Gastrocnemius medialis (tissue), 4 donors: ENCODE measurements at regions of chr10 and their contacts with region 1.

Region 1: DNA sequence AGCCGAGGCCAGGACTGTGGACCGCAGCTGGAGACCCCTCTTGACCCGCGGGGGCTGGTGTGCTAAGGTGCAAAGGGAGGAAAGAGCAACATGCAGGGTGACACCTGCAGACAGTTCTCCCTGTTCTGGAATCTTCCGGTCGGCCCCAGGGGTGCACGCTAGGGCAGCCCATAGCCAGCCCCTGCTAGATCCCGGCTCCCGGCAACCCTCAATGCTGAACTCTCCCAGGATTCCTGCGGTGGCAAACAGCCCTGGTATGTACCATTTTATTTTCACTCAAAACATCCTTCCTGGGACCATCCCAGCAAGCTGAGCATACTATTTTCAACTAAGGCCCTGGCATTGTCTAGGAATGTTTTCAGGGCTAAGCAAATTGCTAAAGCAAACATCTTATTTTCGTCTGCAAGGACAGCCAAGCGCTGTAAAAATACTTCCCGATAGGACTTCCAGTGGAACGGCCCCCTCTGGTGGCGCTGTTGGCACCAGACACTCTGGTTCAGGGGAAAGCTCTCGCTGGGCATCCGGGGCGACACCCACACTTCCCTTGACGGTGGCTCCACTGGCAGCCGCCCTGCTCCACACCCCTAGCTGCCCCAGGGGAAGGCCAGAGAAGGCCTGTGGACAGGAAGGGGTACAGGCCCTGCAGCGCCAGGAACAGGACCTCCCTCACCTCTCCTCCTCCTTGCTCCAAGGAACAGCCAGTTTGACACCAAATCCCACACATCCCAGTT is 99.4 kb downstream of the CTBP2 start:
- DNase-seq: peak; percentile 79 to 85
- ATAC-seq: peak; percentile 51 to 74
- H3K4me3 ChIP-seq: peak overlapping the region; percentile 10 to 32 (median 26)
- H3K27ac ChIP-seq: peak overlapping the region; percentile 91 to 93 (median 91)
- H3K4me1 ChIP-seq: peaks cover 98 to 99% of the 10 kb centered on the region in 2 donors
- H3K27me3 ChIP-seq: no peaks in the 10 kb centered on the region
- CTCF ChIP-seq: peak; percentile 71 to 92 (median 88)
- POLR2A ChIP-seq: no peak

Region 2: DNA sequence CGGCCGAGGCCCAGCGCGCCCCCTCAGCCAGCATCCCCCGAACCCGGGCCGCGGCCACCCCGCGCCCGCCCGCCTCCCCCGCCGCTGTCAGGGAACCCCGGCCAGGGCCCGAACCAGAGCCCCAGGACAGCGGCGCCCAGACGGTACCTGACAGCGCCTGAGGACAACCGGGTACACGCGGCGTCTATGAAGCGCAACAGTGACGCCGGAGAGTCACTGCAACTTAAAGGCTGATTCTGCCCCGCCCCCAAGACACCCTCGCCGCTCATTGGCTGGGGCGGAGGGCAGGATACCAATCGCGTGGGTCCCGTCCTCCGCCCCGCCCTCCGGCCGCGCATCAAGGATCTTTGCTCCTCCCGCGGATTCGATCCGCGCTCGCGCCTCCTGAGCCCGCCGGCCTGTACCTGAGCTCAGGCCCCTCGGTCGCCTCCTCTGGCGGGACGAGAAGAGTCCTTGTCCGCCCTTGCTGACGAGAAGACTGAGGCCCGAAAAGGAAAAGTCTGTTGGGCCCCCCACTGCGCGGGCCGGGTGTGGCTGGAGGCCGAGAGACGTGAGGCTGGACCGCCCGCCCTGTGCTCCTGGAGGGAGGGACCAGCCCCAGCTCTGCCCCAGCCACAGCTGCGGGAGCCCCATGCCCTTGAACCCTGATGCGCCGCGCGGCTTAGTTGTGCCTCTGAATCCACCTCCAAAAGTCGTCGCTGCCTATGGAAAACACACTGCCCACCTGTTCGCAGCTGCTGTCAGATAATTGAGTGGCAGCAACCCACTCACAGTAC is 642.1 kb before region 1 on chr10 and contains the start of gene OAT:
- in situ Hi-C with region 1: no loop called
- intact Hi-C with region 1: loop called (anchors 2 kb)
- DNase-seq: peak; percentile 94 to 95
- ATAC-seq: peak; percentile 93
- H3K4me3 ChIP-seq: peak within 1 kb of the TSS; percentile 67 to 86 (median 76)
- H3K27ac ChIP-seq: peak within 1 kb of the TSS; percentile 81 to 95 (median 94)
- H3K4me1 ChIP-seq: peaks cover 31 to 42% of the 10 kb centered on the region in 2 donors
- H3K27me3 ChIP-seq: no peaks in the 10 kb centered on the region
- CTCF ChIP-seq: no peak
- POLR2A ChIP-seq: peak; percentile 98 to 99
- total RNA-seq, gene OAT: 20.1 to 97.2 (median 42.6) TPM

Region 3: DNA sequence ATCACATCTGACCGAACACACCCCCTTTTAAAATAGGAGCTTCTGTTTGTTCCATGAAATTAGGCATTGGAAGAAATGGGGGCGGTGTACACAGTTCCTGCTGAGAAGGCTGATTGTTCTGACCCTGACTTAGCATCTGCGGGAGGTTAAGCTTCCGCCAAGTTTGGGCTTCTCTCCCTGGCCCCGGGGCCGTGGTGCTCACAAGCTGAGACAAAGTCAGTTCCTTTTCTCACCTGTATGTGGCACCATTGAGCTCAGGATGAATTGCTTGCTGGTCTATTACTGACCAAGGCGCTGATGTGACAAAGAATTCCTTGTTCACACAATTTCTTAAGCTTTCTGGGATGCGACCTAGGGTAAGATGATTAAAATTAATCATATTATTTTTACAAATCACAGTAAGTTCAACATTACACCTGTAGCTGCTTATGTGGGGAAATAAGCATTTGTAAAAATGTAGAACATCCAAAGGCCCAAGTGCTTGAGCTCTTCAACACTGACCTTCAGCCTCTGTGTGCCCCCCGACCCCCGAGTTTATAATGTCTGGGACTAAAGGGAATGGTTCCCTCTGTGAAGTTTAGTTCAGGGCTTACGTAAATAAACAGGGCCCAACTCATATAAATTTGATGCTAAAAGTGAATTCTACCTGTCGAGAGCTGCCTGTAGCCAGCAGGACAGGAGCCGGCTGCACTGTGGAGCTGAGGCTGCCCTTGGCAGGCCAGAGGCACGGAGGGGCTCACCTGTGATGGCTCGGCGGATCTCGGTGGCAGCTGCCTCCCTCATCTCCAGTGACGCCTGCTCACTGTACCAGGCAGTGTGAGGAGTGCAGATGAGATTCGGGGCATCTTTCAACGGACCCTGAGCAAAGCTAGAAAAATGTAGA is 68.3 kb before region 1 on chr10:
- in situ Hi-C with region 1: loop called in 1 of 4 experiments (anchors 10 kb)
- intact Hi-C with region 1: loop called (anchors 2 kb)
- DNase-seq: peak in 1 of 2 donors; percentile 77
- ATAC-seq: peak; percentile 48 to 66
- H3K4me3 ChIP-seq: no peak overlapping the region
- H3K27ac ChIP-seq: peak overlapping the region; percentile 71 to 83 (median 78)
- H3K4me1 ChIP-seq: peaks cover 24 to 28% of the 10 kb centered on the region in 2 donors
- H3K27me3 ChIP-seq: no peaks in the 10 kb centered on the region
- CTCF ChIP-seq: peak; percentile 76 to 86 (median 84)
- POLR2A ChIP-seq: no peak

Region 4: GRCh38 chr10:125048101-125048864 is 12.7 kb before region 1 on chr10:
- in situ Hi-C with region 1: no loop called
- intact Hi-C with region 1: loop called (anchors 1 kb)
- DNase-seq: peak; percentile 69 to 82
- ATAC-seq: peak; percentile 63 to 79
- H3K4me3 ChIP-seq: peak overlapping the region in 1 of 4 donors; percentile 2
- H3K27ac ChIP-seq: peak overlapping the region; percentile 15 to 69 (median 24)
- H3K4me1 ChIP-seq: peaks cover 71 to 91% of the 10 kb centered on the region in 2 donors
- H3K27me3 ChIP-seq: no peaks in the 10 kb centered on the region
- CTCF ChIP-seq: peak; percentile 95 to 98 (median 98)
- POLR2A ChIP-seq: no peak

Region 5: GRCh38 chr10:125343118-125343925 is 282.3 kb after region 1 on chr10:
- in situ Hi-C with region 1: loop called in 1 of 4 experiments (anchors 25 kb)
- intact Hi-C with region 1: no loop called
- DNase-seq: no peak
- ATAC-seq: peak; percentile 42 to 61
- H3K4me3 ChIP-seq: no peak overlapping the region
- H3K27ac ChIP-seq: no peak overlapping the region
- H3K4me1 ChIP-seq: no peaks in the 10 kb centered on the region
- H3K27me3 ChIP-seq: no peaks in the 10 kb centered on the region
- CTCF ChIP-seq: peak; percentile 43 to 73 (median 63)
- POLR2A ChIP-seq: no peak